WTC11 (cell line): ENCODE measurements at regions of chr6 and their contacts with region 1.

Region 1: DNA sequence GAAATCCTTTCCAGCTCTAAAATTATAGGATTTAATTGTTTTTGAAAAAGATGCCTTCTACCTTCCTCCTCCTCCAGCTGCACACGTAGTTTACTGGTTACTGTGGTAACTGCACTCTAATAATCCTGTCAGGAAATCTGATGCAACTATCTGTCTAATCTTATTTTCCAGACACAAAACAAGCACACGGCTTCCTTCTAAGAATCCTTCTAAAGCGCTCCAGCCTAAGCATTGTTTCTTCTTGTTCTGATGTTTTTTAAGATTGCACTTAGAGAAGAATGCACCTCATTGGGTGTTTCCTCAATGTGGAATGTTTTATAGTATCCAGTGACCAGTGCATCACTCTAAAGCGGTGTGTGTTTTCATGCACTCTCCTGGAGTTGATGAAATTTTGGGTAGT is 63.6 kb downstream of the CARMIL1 start:
- DNase-seq: no peak
- ATAC-seq: no peak
- H3K4me3 Mint-ChIP-seq: no peak overlapping the region
- H3K27ac Mint-ChIP-seq: peak overlapping the region; percentile 46; the same call in 1 of the 2 replicates
- H3K4me1 Mint-ChIP-seq: peaks cover 36% of the 10 kb centered on the region
- H3K27me3 Mint-ChIP-seq: no peaks in the 10 kb centered on the region
- CTCF ChIP-seq: no peak

Region 2: GRCh38 chr6:25490018-25490801 is 147.4 kb after region 1 on chr6:
- CTCF ChIA-PET with region 1: interaction called, 21 read pairs
- POLR2A ChIA-PET with region 1: no interaction called
- DNase-seq: peak; percentile 86
- ATAC-seq: peak; percentile 100
- H3K4me3 Mint-ChIP-seq: no peak overlapping the region
- H3K27ac Mint-ChIP-seq: peak overlapping the region; percentile 73
- H3K4me1 Mint-ChIP-seq: peaks cover 16% of the 10 kb centered on the region
- H3K27me3 Mint-ChIP-seq: no peaks in the 10 kb centered on the region
- CTCF ChIP-seq: peak; percentile 64